ENCODE measurements at regions of chr17 and their contacts with region 1.

Region 1: DNA sequence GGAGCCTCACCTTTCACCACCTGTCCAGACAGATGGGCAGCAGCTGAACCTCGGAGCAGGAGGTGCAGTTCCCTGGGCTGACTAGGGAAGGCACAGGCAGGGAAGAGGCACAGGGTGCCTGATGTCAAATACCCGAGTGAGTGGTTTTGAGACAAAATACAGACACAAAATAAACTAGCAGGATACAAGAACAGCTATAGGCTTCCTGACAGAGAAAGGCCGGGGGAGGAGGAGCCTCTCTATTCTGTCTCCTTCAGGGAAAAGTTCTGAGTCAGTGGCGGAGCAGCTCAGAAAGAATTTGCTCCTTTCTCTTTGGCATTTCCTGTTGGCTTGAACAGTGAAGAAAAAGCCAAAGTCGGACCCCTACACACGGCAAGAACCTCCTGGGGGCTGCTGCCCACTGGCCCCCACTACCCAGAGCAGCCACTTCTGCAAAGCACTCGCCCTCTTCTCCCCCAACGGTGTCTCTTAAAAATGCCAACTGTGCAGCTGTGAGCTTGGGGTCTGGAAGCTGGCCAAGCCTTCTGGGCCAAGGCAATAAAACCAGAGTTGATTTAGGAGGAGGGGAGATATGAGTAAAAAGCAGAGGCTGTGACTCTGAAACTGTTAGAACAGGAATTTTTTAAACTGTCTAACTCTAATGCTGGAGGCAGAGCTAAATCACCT is 14.4 kb upstream of the FAAP100 start:
- DNase-seq: peak; percentile 97
- H3K4me3 ChIP-seq: peak overlapping the region in 1 of 3 experiments; percentile 27
- H3K27ac ChIP-seq: peak overlapping the region; percentile 96
- H3K4me1 ChIP-seq: peaks cover 60% of the 10 kb centered on the region
- H3K27me3 ChIP-seq: no peaks in the 10 kb centered on the region
- CTCF ChIP-seq: no peak
- POLR2A ChIP-seq: peak; percentile 81

Region 2: GRCh38 chr17:81512560-81513371 is 53.8 kb before region 1 on chr17 and contains the start of gene ACTG1:
- CTCF ChIA-PET with region 1: no interaction called
- POLR2A ChIA-PET with region 1: interaction called, 3 read pairs
- dilution Hi-C with region 1: no loop called
- intact Hi-C with region 1: loop called (anchors 2 kb)
- DNase-seq: peak; percentile 88
- H3K4me3 ChIP-seq: peak within 1 kb of the TSS; percentile 42 to 93 (median 78)
- H3K27ac ChIP-seq: peak within 1 kb of the TSS; percentile 60
- H3K4me1 ChIP-seq: peaks cover 36% of the 10 kb centered on the region
- H3K27me3 ChIP-seq: no peaks in the 10 kb centered on the region
- CTCF ChIP-seq: no peak
- POLR2A ChIP-seq: peak; percentile 99
- total RNA-seq, gene ACTG1: 6,127 and 6,180 TPM in 2 replicates

Region 3: DNA sequence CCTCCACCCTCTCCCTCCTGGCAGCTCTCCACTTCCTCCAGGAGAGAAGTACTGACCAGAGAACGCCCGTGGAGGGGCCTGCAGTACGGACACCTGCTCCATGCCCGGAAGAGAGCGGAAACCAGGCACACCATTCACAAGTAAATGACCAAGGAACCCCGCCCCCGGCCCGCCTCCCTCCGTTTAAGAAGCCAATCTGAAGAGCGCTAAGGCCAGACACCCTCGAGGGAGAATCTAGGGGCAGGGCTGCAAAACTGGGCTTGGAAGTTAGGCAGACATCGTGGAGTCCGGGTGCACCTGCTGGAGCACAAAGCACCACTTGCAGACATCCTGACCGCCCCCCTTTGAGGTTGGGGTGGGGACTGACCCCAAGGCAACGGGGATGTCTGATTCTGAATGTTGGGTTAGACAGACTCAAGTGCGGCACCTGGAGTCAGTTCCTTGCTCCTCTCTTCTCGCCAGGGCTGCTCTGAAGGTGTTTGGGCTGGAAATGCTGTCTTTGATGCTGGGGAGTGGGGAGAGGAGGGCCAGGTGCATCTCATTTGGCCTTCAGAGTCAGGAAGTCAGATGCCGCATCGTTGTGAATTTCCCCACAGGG is 13.5 kb before region 1 on chr17:
- CTCF ChIA-PET with region 1: interaction called, 16 read pairs
- POLR2A ChIA-PET with region 1: interaction called, 6 read pairs
- dilution Hi-C with region 1: no loop called
- intact Hi-C with region 1: loop called (anchors 1 kb)
- DNase-seq: peak; percentile 81
- H3K4me3 ChIP-seq: peak overlapping the region; percentile 61 to 93 (median 72)
- H3K27ac ChIP-seq: peak overlapping the region; percentile 79
- H3K4me1 ChIP-seq: peaks cover 46% of the 10 kb centered on the region
- H3K27me3 ChIP-seq: no peaks in the 10 kb centered on the region
- CTCF ChIP-seq: no peak
- POLR2A ChIP-seq: peak; percentile 73

Region 4: GRCh38 chr17:81576621-81577277 is 10.2 kb after region 1 on chr17:
- CTCF ChIA-PET with region 1: interaction called, 18 read pairs
- POLR2A ChIA-PET with region 1: interaction called, 5 read pairs
- dilution Hi-C with region 1: no loop called
- intact Hi-C with region 1: loop called (anchors 1 kb)
- DNase-seq: peak; percentile 78
- H3K4me3 ChIP-seq: peak overlapping the region in 1 of 3 experiments; percentile 13
- H3K27ac ChIP-seq: peak overlapping the region; percentile 81
- H3K4me1 ChIP-seq: peaks cover 27% of the 10 kb centered on the region
- H3K27me3 ChIP-seq: no peaks in the 10 kb centered on the region
- CTCF ChIP-seq: no peak
- POLR2A ChIP-seq: peak; percentile 60

Region 5: GRCh38 chr17:81582341-81582740 is 15.7 kb after region 1 on chr17:
- CTCF ChIA-PET with region 1: interaction called, 18 read pairs
- POLR2A ChIA-PET with region 1: interaction called, 5 read pairs
- dilution Hi-C with region 1: no loop called
- intact Hi-C with region 1: loop called (anchors 2 kb)
- DNase-seq: no peak
- H3K4me3 ChIP-seq: no peak overlapping the region
- H3K27ac ChIP-seq: peak overlapping the region; percentile 18
- H3K4me1 ChIP-seq: peaks cover 30% of the 10 kb centered on the region
- H3K27me3 ChIP-seq: no peaks in the 10 kb centered on the region
- CTCF ChIP-seq: no peak
- POLR2A ChIP-seq: no peak